ENCODE measurements at regions of chr15 and their contacts with region 1.

Region 1: DNA sequence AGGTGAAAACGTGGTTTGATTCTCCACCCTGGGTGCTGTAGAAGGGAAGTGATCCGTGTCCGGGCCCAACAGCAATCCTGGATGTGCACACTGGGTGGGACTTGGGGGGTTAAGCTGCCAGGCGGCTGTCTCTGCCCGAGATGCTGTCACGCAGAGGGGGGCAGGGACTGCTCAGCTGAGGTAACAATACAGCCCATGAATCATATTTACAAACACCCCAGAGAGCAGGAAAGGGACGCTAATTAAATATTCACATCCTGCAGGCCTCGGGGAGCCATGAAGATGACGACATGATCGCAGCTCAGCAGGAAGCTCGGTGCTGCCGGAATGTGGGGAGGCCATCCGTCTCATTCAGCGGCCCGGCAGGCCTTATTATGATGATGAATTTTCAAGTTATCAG is 17.9 kb upstream of the CRABP1 start:
- DNase-seq: peak; percentile 63

Region 2: GRCh38 chr15:77457905-77458265 is 864.4 kb before region 1 on chr15:
- intact Hi-C with region 1: no loop called
- DNase-seq: no peak

Region 3: DNA sequence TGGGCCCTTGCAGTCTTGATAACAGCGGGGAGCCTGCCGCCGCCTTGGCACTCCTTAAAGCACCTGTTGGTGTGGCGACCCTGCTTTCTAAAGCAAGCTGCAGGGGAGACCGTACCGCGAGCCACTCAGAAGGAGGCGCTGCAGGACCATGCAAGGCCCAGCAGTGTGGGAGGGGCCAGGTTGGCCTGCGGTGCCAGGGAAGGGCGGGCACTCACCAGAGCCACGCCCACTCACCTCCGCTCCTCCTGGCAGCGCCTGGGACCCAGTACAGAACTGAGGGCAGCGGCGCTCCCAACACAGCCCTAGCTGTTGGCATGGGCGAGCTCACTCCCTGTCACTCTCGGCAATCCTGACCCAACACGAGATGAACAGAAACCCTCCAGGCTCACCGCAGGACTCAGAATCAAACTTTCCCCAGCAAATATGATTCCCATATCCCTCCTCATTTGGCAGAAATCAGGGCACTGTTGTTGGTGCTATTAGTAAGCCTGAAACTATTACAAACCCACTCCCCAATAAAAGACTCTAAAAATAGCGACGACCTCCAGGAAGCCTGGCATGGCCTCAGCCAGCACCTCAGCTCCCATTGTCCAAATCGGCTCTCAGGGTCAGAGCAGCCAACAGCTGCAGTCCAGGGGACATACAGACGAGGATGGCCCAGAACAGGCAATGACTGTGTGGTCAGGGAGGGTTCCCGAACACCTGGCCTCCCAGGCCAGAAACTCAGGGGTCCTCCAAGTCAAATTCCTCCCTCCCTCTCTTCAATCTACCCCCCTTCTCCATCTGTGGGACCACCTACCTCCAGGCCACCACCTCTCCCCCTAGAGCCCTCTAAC is 321.9 kb before region 1 on chr15:
- intact Hi-C with region 1: no loop called
- DNase-seq: peak; percentile 90

Region 4: GRCh38 chr15:78415286-78415685 is 93.0 kb after region 1 on chr15:
- intact Hi-C with region 1: loop called (anchors 5 to 10 kb)
- DNase-seq: no peak